ENCODE measurements at regions of chr17 and their contacts with region 1.

Region 1: GRCh38 chr17:17675925-17676534 is 5.2 kb upstream of the RAI1 start:
- DNase-seq: no peak
- H3K4me3 ChIP-seq: no peak overlapping the region
- H3K27ac ChIP-seq: no peak overlapping the region
- H3K4me1 ChIP-seq: peaks cover 33% of the 10 kb centered on the region
- H3K27me3 ChIP-seq: no peaks in the 10 kb centered on the region
- CTCF ChIP-seq: no peak

Region 2: GRCh38 chr17:17739388-17740066 is 63.5 kb after region 1 on chr17:
- intact Hi-C with region 1: no loop called
- DNase-seq: no peak
- H3K4me3 ChIP-seq: no peak overlapping the region
- H3K27ac ChIP-seq: peak overlapping the region; percentile 79
- H3K4me1 ChIP-seq: peaks cover 82% of the 10 kb centered on the region
- H3K27me3 ChIP-seq: no peaks in the 10 kb centered on the region
- CTCF ChIP-seq: no peak

Region 3: GRCh38 chr17:18025945-18026776 is 350.1 kb after region 1 on chr17:
- intact Hi-C with region 1: loop called (anchors 10 kb)
- DNase-seq: peak; percentile 56
- H3K4me3 ChIP-seq: no peak overlapping the region
- H3K27ac ChIP-seq: peak overlapping the region; percentile 90
- H3K4me1 ChIP-seq: peaks cover 53% of the 10 kb centered on the region
- H3K27me3 ChIP-seq: no peaks in the 10 kb centered on the region
- CTCF ChIP-seq: no peak

Measured in left ventricle myocardium inferior (tissue), 1 donor.